Activated T-helper 1 cell treated with anti-CD3 and anti-CD28 coated beads, Interleukin-12 subunit alpha, Interleukin-12 subunit beta, Interleukin-2, Interleukin-4 antibody, amounts not matched to agents 30 ng/mL and 10 ng/mL and 1 ng/mL, durations not matched to agents 14 hours and 24 hours and 36 hours (primary cell): ENCODE measurements at regions of chr11 and their contacts with region 1.

Region 1: DNA sequence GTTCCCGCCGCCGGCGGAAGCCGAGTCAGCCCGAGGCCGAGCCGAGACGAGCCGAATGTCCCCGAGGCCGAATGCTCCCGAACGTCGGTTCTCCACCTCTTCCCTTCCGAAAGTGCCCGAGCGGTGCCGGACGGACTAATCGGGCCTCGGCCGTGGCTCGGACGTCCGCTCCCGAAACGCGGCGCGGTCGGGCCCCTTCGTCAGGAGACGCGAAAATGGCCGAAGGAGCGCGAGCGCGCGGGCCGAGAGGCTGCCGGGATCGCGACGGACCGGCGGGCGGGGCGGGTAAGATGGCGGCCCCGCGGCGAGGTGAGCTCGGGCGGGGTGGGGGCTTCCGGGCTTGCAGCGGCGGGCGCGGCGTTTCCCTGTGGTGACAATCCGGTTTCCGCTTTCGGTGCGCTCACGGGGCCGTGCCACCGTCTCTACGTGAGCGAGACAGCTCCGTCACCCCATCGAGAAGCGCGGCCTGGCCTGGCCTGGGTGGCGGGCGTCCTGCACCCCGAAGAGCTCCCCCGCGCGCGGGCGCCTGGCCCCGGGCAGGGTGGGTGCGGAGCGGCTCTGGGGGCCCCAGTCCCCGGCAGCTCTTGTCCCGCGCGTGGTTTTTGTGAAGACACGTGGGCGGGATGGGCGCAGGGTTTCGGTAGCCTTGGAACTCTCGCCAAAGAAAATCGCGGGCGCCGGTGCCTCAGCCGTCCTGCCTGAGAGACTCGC is at the start of gene TMEM80:
- DNase-seq: peak; percentile 98
- H3K4me3 Mint-ChIP-seq: peak within 1 kb of the TSS; percentile 88
- H3K27ac Mint-ChIP-seq: peak within 1 kb of the TSS; percentile 93
- H3K4me1 Mint-ChIP-seq: peaks cover 49% of the 10 kb centered on the region
- H3K27me3 Mint-ChIP-seq: peaks cover 2% of the 10 kb centered on the region
- total RNA-seq, gene TMEM80: 14.2 and 14.7 TPM in 2 replicates

Region 2: GRCh38 chr11:568306-569157 is 127.2 kb before region 1 on chr11:
- intact Hi-C with region 1: loop called (anchors 1 kb)
- DNase-seq: peak; percentile 97
- H3K4me3 Mint-ChIP-seq: peak overlapping the region; percentile 79
- H3K27ac Mint-ChIP-seq: no peak overlapping the region
- H3K4me1 Mint-ChIP-seq: peaks cover 15% of the 10 kb centered on the region
- H3K27me3 Mint-ChIP-seq: peaks cover 2% of the 10 kb centered on the region

Region 3: DNA sequence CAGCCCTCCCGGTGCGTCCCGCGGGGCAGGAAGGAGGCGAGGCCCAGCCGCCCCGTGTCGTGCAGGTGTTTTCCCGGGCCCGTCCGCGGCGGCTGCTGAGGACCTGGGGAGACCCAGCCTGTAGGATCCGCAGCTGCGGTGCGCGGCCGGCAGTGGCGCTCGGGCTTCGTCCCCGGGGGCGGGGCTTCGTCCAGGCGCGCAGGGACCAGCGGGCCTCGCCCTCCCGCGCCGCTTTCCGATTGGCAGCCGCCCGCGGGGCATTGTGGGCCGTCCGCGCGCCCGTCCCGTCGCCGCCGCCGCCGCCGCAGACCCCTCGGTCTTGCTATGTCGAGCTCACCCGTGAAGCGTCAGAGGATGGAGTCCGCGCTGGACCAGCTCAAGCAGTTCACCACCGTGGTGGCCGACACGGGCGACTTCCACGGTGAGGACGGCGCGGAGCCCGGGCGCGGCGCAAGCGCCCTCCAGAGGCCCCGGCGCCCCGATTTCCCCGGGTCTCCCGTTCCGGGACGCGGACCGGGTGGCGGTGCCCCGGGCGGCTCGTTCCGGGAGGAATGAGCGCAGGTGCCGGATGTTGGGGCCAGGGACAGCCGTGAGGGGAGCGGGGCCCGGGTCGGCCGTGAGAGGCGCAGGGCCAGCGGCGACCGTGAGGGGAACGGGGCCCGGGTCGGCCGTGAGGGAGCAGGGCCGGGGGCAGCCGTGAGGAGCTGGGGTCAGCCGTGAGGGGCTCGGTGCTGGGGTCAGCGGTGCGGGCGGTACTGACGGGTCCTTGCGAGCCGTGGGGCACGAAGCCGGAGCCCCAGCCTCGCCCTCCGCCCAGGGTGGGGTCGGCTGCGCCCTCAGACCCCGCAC is 51.7 kb after region 1 on chr11 and contains the start of gene TALDO1:
- intact Hi-C with region 1: loop called (anchors 1 kb)
- DNase-seq: peak; percentile 88
- H3K4me3 Mint-ChIP-seq: peak within 1 kb of the TSS; percentile 91
- H3K27ac Mint-ChIP-seq: peak within 1 kb of the TSS; percentile 90
- H3K4me1 Mint-ChIP-seq: peaks cover 25% of the 10 kb centered on the region
- H3K27me3 Mint-ChIP-seq: no peaks in the 10 kb centered on the region
- total RNA-seq, gene TALDO1: 269 and 283 TPM in 2 replicates

Region 4: GRCh38 chr11:1389103-1389931 is 693.6 kb after region 1 on chr11:
- intact Hi-C with region 1: loop called (anchors 10 kb)
- DNase-seq: peak; percentile 93
- H3K4me3 Mint-ChIP-seq: peak overlapping the region; percentile 30
- H3K27ac Mint-ChIP-seq: no peak overlapping the region
- H3K4me1 Mint-ChIP-seq: peaks cover 5% of the 10 kb centered on the region
- H3K27me3 Mint-ChIP-seq: peaks cover 33% of the 10 kb centered on the region